Adrenal gland (tissue), 19 donors: ENCODE measurements at regions of chr6 and their contacts with region 1.

Region 1: GRCh38 chr6:57221936-57222742 is at the start of gene RAB23:
- DNase-seq: peak; percentile 79 to 88 (median 85)
- H3K4me3 ChIP-seq: peak within 1 kb of the TSS; percentile 13 to 97 (median 78)
- H3K27ac ChIP-seq: peak within 1 kb of the TSS in 3 of 5 donors; percentile 31 to 75 (median 38)
- H3K4me1 ChIP-seq: peaks cover 0 to 5% of the 10 kb centered on the region in 2 donors
- H3K27me3 ChIP-seq: no peaks in the 10 kb centered on the region
- CTCF ChIP-seq: peak in 1 of 6 experiments; percentile 10
- POLR2A ChIP-seq: peak; percentile 39 to 49
- total RNA-seq, gene RAB23: 4.3 to 14.7 (median 5.8) TPM

Region 2: GRCh38 chr6:57172136-57173055 is 49.7 kb before region 1 on chr6 and contains the start of gene BAG2:
- intact Hi-C with region 1: loop called in 1 of 2 experiments (anchors 10 kb)
- DNase-seq: peak; percentile 84 to 95 (median 93)
- H3K4me3 ChIP-seq: peak within 1 kb of the TSS in 3 of 4 donors; percentile 34 to 72 (median 60)
- H3K27ac ChIP-seq: peak within 1 kb of the TSS; percentile 45 to 95 (median 92)
- H3K4me1 ChIP-seq: peaks cover 13 to 22% of the 10 kb centered on the region in 2 donors
- H3K27me3 ChIP-seq: no peaks in the 10 kb centered on the region
- CTCF ChIP-seq: peak in 4 of 6 experiments; percentile 24 to 43 (median 33)
- POLR2A ChIP-seq: peak; percentile 8 to 91
- total RNA-seq, gene BAG2: 6.2 to 18.0 (median 7.5) TPM